ENCODE measurements at regions of chr5 and their contacts with region 1.

Region 1: GRCh38 chr5:149618581-149619251 is 37.4 kb downstream of the ARHGEF37 start:
- DNase-seq: peak; percentile 62
- ATAC-seq: peak; percentile 67
- H3K4me3 ChIP-seq: peak overlapping the region; percentile 43; the same call in 1 of the 2 replicates
- H3K27ac ChIP-seq: peak overlapping the region; percentile 59
- H3K4me1 ChIP-seq: peaks cover 31% of the 10 kb centered on the region
- H3K27me3 ChIP-seq: no peaks in the 10 kb centered on the region
- CTCF ChIP-seq: peak; percentile 64 to 81 (median 73)
- EP300 ChIP-seq: no peak
- POLR2A ChIP-seq: no peak
- RAD21 ChIP-seq: peak; percentile 84

Region 2: GRCh38 chr5:149367249-149367971 is 251.3 kb before region 1 on chr5:
- CTCF ChIA-PET with region 1: interaction called, 16 read pairs
- POLR2A ChIA-PET with region 1: no interaction called
- RAD21 ChIA-PET with region 1: interaction called, 5 read pairs
- SMC1A ChIA-PET with region 1: interaction called, 3 read pairs
- in situ Hi-C with region 1: no loop called
- intact Hi-C with region 1: no loop called
- DNase-seq: no peak
- ATAC-seq: peak; percentile 93
- H3K4me3 ChIP-seq: no peak overlapping the region
- H3K27ac ChIP-seq: no peak overlapping the region
- H3K4me1 ChIP-seq: no peaks in the 10 kb centered on the region
- H3K27me3 ChIP-seq: no peaks in the 10 kb centered on the region
- CTCF ChIP-seq: peak; percentile 83 to 84 (median 83)
- EP300 ChIP-seq: no peak
- POLR2A ChIP-seq: no peak
- RAD21 ChIP-seq: peak; percentile 59

Region 3: GRCh38 chr5:149442563-149443182 is 176.0 kb before region 1 on chr5:
- CTCF ChIA-PET with region 1: interaction called, 108 read pairs
- POLR2A ChIA-PET with region 1: no interaction called
- RAD21 ChIA-PET with region 1: interaction called, 27 read pairs
- SMC1A ChIA-PET with region 1: interaction called, 20 read pairs
- in situ Hi-C with region 1: no loop called
- intact Hi-C with region 1: loop called (anchors 2 kb)
- DNase-seq: no peak
- ATAC-seq: peak; percentile 95
- H3K4me3 ChIP-seq: no peak overlapping the region
- H3K27ac ChIP-seq: no peak overlapping the region
- H3K4me1 ChIP-seq: no peaks in the 10 kb centered on the region
- H3K27me3 ChIP-seq: no peaks in the 10 kb centered on the region; a peak in 1 of 4 replicates
- CTCF ChIP-seq: peak; percentile 85 to 96 (median 93)
- EP300 ChIP-seq: no peak
- POLR2A ChIP-seq: no peak
- RAD21 ChIP-seq: peak; percentile 75

Region 4: DNA sequence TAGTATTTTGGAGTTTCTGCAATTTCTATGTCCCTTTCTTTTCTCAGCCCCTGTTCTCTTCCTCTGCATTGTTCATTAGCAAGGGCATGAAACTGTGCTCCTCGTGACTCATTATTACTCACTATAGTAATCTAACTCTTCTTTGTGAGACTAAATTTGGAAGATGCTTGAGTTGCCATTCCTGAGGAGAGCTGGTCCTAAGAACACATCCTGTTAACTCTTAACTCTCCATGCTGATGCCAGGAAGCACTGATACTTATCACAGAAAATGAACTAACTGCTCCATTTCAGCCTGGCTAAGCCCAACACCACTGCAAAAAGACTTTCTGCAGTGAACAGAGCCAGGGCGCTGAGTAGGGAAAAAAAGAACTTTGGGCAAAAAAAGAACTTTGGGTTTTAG is 56.9 kb before region 1 on chr5:
- CTCF ChIA-PET with region 1: interaction called, 64 read pairs
- POLR2A ChIA-PET with region 1: interaction called, 3 read pairs
- RAD21 ChIA-PET with region 1: interaction called, 39 read pairs
- SMC1A ChIA-PET with region 1: interaction called, 37 read pairs
- in situ Hi-C with region 1: no loop called
- intact Hi-C with region 1: loop called (anchors 1 kb)
- DNase-seq: no peak
- ATAC-seq: no peak
- H3K4me3 ChIP-seq: no peak overlapping the region
- H3K27ac ChIP-seq: no peak overlapping the region
- H3K4me1 ChIP-seq: no peaks in the 10 kb centered on the region
- H3K27me3 ChIP-seq: no peaks in the 10 kb centered on the region
- CTCF ChIP-seq: no peak
- EP300 ChIP-seq: no peak
- POLR2A ChIP-seq: no peak
- RAD21 ChIP-seq: no peak

Region 5: DNA sequence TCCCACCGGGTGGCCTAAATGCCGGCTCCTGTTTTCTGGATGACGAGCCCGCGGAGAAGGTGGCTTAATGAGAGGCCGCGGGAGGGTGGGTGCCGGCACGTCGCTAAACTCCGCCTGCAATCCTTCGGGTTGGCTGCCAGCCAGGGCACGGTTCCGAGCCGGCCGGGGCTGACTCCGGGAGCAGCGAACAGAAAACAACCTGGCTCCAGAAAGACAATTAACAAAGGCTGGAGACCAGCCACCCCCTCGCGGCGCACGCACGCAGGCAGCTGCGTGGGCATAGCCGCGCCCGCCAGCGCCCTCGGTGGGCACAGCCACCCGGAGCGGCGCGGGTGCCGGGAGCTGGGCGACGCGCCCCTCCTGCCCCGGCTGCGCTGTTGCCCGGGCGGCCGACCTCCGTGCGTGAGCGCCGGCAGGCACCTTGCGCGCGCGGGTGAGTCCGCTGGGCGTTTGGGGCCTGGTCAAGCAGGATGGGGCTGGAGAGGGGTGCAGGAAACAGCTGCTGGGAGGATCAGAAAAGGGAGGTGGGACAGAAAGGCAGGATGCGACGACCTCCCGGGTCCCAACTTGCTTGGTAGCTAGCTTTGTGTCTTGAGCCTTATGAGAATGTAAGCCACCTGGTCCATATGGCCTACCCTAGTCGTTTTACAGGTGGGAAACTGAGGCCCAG is 37.4 kb before region 1 on chr5 and contains the start of gene ARHGEF37:
- CTCF ChIA-PET with region 1: interaction called, 31 read pairs
- POLR2A ChIA-PET with region 1: no interaction called
- RAD21 ChIA-PET with region 1: interaction called, 3 read pairs
- SMC1A ChIA-PET with region 1: interaction called, 19 read pairs
- in situ Hi-C with region 1: no loop called
- intact Hi-C with region 1: no loop called
- DNase-seq: no peak
- ATAC-seq: peak; percentile 75
- H3K4me3 ChIP-seq: peak within 1 kb of the TSS; percentile 39; the same call in 1 of the 2 replicates
- H3K27ac ChIP-seq: no peak within 1 kb of the TSS
- H3K4me1 ChIP-seq: peaks cover 4% of the 10 kb centered on the region
- H3K27me3 ChIP-seq: peaks cover 0 to 2% of the 10 kb centered on the region in 2 experiments; a peak in 2 of 4 replicates
- CTCF ChIP-seq: no peak
- EP300 ChIP-seq: no peak
- POLR2A ChIP-seq: no peak
- RAD21 ChIP-seq: no peak
- polyA plus RNA-seq, gene ARHGEF37: 0.16 to 0.23 TPM

Region 6: GRCh38 chr5:149828161-149828884 is 209.6 kb after region 1 on chr5:
- CTCF ChIA-PET with region 1: interaction called, 11 read pairs
- POLR2A ChIA-PET with region 1: no interaction called
- RAD21 ChIA-PET with region 1: interaction called, 8 read pairs
- SMC1A ChIA-PET with region 1: interaction called, 6 read pairs
- in situ Hi-C with region 1: no loop called
- intact Hi-C with region 1: no loop called
- DNase-seq: peak; percentile 79
- ATAC-seq: peak; percentile 84
- H3K4me3 ChIP-seq: no peak overlapping the region
- H3K27ac ChIP-seq: no peak overlapping the region
- H3K4me1 ChIP-seq: peaks cover 8% of the 10 kb centered on the region
- H3K27me3 ChIP-seq: no peaks in the 10 kb centered on the region
- CTCF ChIP-seq: peak; percentile 78 to 89 (median 83)
- EP300 ChIP-seq: no peak
- POLR2A ChIP-seq: no peak
- RAD21 ChIP-seq: peak; percentile 95

Measured in GM12878 (cell line).